ENCODE measurements at regions of chr10 and their contacts with region 1.

Region 1: DNA sequence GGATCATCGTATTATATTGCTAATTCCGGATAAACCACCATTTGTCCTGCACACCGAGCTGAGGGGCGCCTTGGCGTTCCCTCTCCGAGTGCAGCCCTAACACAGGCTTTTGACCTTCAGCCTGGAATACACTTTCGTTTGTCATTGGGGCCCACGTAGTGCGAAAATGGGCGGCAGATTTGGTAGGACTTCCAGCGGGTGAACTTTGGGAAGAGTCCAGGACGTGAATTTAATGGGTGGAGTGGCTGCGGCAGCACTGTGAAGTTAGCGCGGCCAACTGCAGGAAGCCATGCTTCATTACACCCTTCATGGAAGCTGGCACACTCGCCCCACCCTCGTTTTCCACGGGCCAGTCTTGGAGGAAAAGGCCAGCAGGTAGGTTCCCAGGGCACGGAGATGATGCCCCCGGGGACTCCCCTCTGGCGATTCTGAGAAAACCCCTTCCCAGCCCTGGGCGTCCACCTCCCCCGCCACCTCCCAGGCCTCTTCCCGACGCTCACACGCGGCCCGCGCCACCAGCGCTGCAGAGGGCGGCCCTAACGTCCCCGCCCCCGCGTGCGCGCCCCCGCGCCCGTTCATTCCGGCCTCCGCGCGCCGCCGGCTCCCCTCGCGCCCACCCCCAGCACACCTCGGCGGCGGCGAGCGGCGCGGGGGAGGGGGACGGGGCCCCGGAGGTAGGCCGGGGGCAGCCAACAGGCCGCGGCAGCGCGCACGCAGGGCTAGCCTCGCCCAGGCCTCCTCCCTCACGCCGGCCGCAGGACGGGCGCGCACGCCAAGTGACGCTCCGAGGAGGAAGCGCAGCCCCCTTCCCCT is at the start of gene MLLT10:
- DNase-seq: peak; percentile 89
- H3K4me3 Mint-ChIP-seq: peak within 1 kb of the TSS; percentile 90
- H3K27ac Mint-ChIP-seq: peak within 1 kb of the TSS; percentile 90
- H3K4me1 Mint-ChIP-seq: peaks cover 17% of the 10 kb centered on the region
- H3K27me3 Mint-ChIP-seq: peaks cover 16% of the 10 kb centered on the region
- total RNA-seq, gene MLLT10: 40.9 and 43.1 TPM in 2 replicates

Region 2: GRCh38 chr10:21516242-21517131 is 17.2 kb before region 1 on chr10:
- intact Hi-C with region 1: loop called (anchors 1 kb)
- DNase-seq: peak; percentile 45
- H3K4me3 Mint-ChIP-seq: peak overlapping the region; percentile 79
- H3K27ac Mint-ChIP-seq: no peak overlapping the region
- H3K4me1 Mint-ChIP-seq: peaks cover 47% of the 10 kb centered on the region
- H3K27me3 Mint-ChIP-seq: peaks cover 79% of the 10 kb centered on the region

Region 3: GRCh38 chr10:21556527-21556926 is 22.9 kb after region 1 on chr10:
- intact Hi-C with region 1: no loop called
- DNase-seq: no peak
- H3K4me3 Mint-ChIP-seq: no peak overlapping the region
- H3K27ac Mint-ChIP-seq: no peak overlapping the region
- H3K4me1 Mint-ChIP-seq: peaks cover 5% of the 10 kb centered on the region
- H3K27me3 Mint-ChIP-seq: no peaks in the 10 kb centered on the region

Region 4: GRCh38 chr10:21702633-21703111 is 169.0 kb after region 1 on chr10:
- intact Hi-C with region 1: loop called (anchors 5 kb)
- DNase-seq: no peak
- H3K4me3 Mint-ChIP-seq: peak overlapping the region; percentile 19
- H3K27ac Mint-ChIP-seq: peak overlapping the region; percentile 71
- H3K4me1 Mint-ChIP-seq: peaks cover 21% of the 10 kb centered on the region
- H3K27me3 Mint-ChIP-seq: peaks cover 4% of the 10 kb centered on the region

Region 5: GRCh38 chr10:22228943-22229801 is 695.5 kb after region 1 on chr10:
- intact Hi-C with region 1: loop called (anchors 2 kb)
- DNase-seq: peak; percentile 77
- H3K4me3 Mint-ChIP-seq: peak overlapping the region; percentile 92
- H3K27ac Mint-ChIP-seq: peak overlapping the region; percentile 98
- H3K4me1 Mint-ChIP-seq: peaks cover 32% of the 10 kb centered on the region
- H3K27me3 Mint-ChIP-seq: peaks cover 11% of the 10 kb centered on the region

Region 6: DNA sequence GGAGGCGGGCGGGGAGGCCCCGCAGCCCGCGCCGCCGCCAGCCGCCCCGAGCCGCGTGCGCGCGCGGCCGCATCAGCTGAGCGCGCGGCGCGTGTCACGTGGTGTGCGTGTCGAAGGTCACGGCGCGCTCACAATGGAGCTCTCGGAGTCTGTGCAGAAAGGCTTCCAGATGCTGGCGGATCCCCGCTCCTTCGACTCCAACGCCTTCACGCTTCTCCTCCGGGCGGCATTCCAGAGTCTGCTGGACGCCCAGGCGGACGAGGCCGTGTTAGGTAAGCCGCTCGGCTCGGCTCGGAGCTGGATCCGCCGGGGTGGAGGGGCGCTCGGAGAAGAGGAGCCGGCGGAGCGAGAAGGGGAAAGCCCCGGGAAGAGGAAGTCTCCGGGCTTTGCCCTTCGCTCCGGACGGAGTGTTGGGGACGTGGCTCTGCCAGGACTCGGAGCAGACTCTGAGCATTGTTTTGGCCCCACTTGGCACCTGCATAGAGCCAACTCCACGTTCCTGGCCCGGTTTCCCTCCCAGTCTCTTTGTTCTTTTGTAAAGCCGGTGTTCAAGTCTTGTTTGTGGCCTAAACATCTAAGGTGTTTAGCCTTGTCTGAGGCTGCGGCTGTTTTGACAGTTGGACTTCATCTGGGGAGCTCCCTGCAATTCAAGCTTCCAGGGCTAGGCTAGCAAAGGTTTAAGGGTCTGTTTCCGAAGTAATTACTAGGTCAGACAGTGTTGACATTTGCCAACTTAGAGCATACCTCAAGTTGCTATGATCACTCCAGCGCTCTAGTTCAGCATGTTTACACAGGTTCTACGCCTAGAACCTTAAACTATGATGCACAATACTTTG is 782.8 kb after region 1 on chr10 and contains the start of gene COMMD3:
- intact Hi-C with region 1: loop called (anchors 5 kb)
- DNase-seq: peak; percentile 77
- H3K4me3 Mint-ChIP-seq: peak within 1 kb of the TSS; percentile 98
- H3K27ac Mint-ChIP-seq: peak within 1 kb of the TSS; percentile 100
- H3K4me1 Mint-ChIP-seq: peaks cover 50% of the 10 kb centered on the region
- H3K27me3 Mint-ChIP-seq: peaks cover 2% of the 10 kb centered on the region
- total RNA-seq, gene COMMD3: 78.7 and 84.4 TPM in 2 replicates